HCT116 (cell line): ENCODE measurements at regions of chr14 and their contacts with region 1.

Region 1: DNA sequence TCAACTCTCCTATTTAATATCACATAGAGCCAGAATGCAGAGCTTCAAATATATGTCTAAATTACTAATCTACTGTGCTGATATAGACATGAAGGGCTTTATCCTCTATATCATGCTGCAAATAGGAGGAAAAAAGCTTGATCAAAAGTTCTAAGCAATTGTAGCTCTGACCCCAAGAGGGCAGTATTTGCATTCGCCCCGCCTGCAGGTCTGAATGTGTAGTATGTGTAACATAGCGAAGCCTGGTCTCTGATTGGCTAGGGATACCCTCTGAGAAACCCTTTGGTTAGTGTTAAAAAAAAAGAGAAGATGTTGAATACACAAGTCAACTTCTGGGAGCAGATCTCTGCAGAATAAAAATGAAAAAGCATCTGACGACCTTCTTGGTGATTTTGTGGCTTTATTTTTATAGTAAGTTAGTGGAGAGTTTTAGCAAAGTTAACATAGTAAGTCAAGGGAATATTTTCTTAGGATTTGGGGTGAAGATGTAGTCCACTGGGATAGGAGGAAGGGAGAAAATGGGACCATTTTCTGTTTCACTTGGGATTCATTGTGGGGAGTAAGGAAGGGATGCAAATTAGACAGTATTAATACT is 151.6 kb upstream of the OR4E1 start:
- DNase-seq: peak; percentile 48
- ATAC-seq: peak; percentile 89
- H3K4me3 ChIP-seq: no peak overlapping the region
- H3K27ac ChIP-seq: no peak overlapping the region
- H3K4me1 ChIP-seq: no peaks in the 10 kb centered on the region
- H3K27me3 ChIP-seq: peaks cover 29% of the 10 kb centered on the region
- CTCF ChIP-seq: peak; percentile 17 to 80 (median 78); a peak in 5 of 6 replicates
- POLR2A ChIP-seq: no peak
- RAD21 ChIP-seq: no peak

Region 2: GRCh38 chr14:21852061-21852664 is 26.9 kb after region 1 on chr14:
- CTCF ChIA-PET with region 1: interaction called, 10 read pairs
- POLR2A ChIA-PET with region 1: no interaction called
- RAD21 ChIA-PET with region 1: interaction called in 1 of 2 experiments, 5 read pairs
- intact Hi-C with region 1: no loop called
- DNase-seq: peak; percentile 16
- ATAC-seq: peak; percentile 75
- H3K4me3 ChIP-seq: no peak overlapping the region
- H3K27ac ChIP-seq: no peak overlapping the region
- H3K4me1 ChIP-seq: no peaks in the 10 kb centered on the region
- H3K27me3 ChIP-seq: peaks cover 36% of the 10 kb centered on the region; the same call in 1 of the 2 replicates
- CTCF ChIP-seq: peak in 2 of 3 experiments; percentile 92; a peak in 4 of 6 replicates
- POLR2A ChIP-seq: no peak
- RAD21 ChIP-seq: no peak